IMR-90 (cell line): ENCODE measurements at regions of chr2 and their contacts with region 1.

Region 1: GRCh38 chr2:230068016-230068650 is 591 bp downstream of the SLC16A14 start:
- DNase-seq: peak; percentile 13
- ATAC-seq: peak; percentile 61
- H3K4me3 ChIP-seq: peak overlapping the region; percentile 46
- H3K27ac ChIP-seq: peak overlapping the region; percentile 39
- H3K4me1 ChIP-seq: no peaks in the 10 kb centered on the region
- H3K27me3 ChIP-seq: peaks cover 3% of the 10 kb centered on the region; the same call in 1 of the 2 replicates
- CTCF ChIP-seq: no peak
- POLR2A ChIP-seq: no peak
- RAD21 ChIP-seq: no peak

Region 2: GRCh38 chr2:229780856-229781773 is 287.0 kb before region 1 on chr2:
- CTCF ChIA-PET with region 1: no interaction called
- POLR2A ChIA-PET with region 1: no interaction called
- dilution Hi-C with region 1: no loop called
- in situ Hi-C with region 1: no loop called
- intact Hi-C with region 1: no loop called
- DNase-seq: peak; percentile 77
- ATAC-seq: peak; percentile 85
- H3K4me3 ChIP-seq: no peak overlapping the region
- H3K27ac ChIP-seq: no peak overlapping the region; the same call in 1 of the 2 replicates
- H3K4me1 ChIP-seq: peaks cover 8% of the 10 kb centered on the region
- H3K27me3 ChIP-seq: no peaks in the 10 kb centered on the region
- CTCF ChIP-seq: peak; percentile 80
- POLR2A ChIP-seq: no peak
- RAD21 ChIP-seq: peak; percentile 46

Region 3: DNA sequence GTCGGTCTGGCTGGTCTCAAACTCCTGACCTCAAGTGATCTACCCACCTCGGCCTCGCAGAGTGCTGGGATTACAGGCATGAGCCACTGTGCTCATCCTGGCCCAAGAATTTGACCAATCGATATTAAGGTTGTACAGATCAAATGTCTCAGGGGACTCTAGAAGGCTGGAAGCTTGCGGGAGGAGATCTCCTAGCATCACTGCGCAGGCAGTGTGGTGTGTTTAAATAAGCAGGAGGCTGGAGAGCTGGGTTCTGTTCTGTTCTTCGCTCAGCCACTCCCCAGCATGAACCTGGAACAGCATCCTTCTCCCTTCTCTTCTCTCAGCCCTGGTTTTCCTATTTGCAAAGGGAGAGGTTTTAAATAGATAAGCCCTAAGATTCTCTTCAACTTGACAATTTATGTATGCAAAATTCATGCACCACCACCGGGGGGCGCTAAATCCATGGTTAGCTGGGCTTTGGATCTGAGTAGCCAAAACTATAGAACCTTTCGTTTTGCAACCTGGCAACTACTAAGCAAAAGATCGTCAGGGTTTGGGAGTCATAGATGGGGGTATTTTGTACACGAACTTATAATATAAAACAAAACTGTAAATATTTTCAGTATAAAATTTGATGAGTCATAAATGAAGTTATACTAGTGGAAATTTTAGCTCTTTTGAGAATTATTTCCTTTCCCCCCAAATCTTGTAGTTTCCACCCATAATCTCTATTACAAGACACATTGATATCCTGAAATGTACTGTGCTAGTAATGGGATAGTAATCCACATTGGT is 60.0 kb before region 1 on chr2:
- CTCF ChIA-PET with region 1: interaction called, 10 read pairs
- POLR2A ChIA-PET with region 1: no interaction called
- dilution Hi-C with region 1: no loop called
- in situ Hi-C with region 1: no loop called
- intact Hi-C with region 1: loop called (anchors 1 kb)
- DNase-seq: peak; percentile 71
- ATAC-seq: peak; percentile 52
- H3K4me3 ChIP-seq: no peak overlapping the region
- H3K27ac ChIP-seq: no peak overlapping the region
- H3K4me1 ChIP-seq: peaks cover 15% of the 10 kb centered on the region
- H3K27me3 ChIP-seq: no peaks in the 10 kb centered on the region
- CTCF ChIP-seq: peak; percentile 88
- POLR2A ChIP-seq: peak; percentile 34; the same call in 1 of the 2 replicates
- RAD21 ChIP-seq: peak; percentile 88

Region 4: DNA sequence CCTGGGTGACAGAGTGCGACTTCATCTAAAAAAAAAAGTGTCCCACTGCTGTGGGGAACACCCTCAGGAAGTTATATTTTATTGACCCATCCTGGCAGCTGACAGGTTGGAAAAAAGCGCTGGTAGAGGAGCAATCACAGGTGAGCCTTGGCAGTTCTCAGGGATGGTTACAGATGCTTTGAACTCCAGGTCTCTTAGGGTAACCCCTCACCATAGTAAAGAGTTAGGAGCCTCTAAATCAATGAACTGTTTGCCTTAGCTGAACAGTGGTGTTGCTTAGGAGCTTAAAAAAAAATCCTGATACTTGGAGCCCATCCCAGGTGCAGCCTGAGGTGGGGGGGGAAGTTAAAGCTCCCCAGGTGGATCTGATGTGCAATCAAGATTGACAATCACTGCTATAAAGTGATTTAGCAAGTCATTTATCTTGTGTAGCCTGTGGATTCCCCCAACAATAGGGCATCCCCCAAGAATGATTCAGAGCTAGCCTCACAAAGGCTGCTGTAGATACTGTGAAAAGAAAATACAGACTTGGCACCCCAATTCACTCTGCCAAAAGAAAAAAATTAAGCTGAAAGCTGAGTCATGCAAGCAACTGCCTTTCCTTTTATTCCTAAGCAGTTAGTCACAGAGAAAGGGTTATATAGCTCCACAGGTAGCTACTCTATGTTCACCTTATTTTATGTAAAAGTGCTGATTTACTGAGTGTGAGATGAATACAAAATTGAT is 14.2 kb before region 1 on chr2:
- CTCF ChIA-PET with region 1: interaction called, 10 read pairs
- POLR2A ChIA-PET with region 1: no interaction called
- dilution Hi-C with region 1: no loop called
- in situ Hi-C with region 1: no loop called
- intact Hi-C with region 1: no loop called
- DNase-seq: peak; percentile 63
- ATAC-seq: peak; percentile 77
- H3K4me3 ChIP-seq: no peak overlapping the region
- H3K27ac ChIP-seq: no peak overlapping the region
- H3K4me1 ChIP-seq: 0 out of 2 replicates have a peak, but pooled peaks cover 1% of the 10 kb centered on the region
- H3K27me3 ChIP-seq: no peaks in the 10 kb centered on the region
- CTCF ChIP-seq: no peak
- POLR2A ChIP-seq: no peak
- RAD21 ChIP-seq: no peak